Heart right ventricle (tissue), 16 donors: ENCODE measurements at regions of chr9 and their contacts with region 1.

Region 1: GRCh38 chr9:83980395-83981125 is at the start of gene RMI1:
- DNase-seq: peak; percentile 99 to 100
- ATAC-seq: peak; percentile 92 to 97 (median 94)
- H3K4me3 ChIP-seq: peak within 1 kb of the TSS; percentile 69 to 93 (median 83)
- H3K27ac ChIP-seq: peak within 1 kb of the TSS; percentile 93 to 100 (median 98)
- H3K4me1 ChIP-seq: peaks cover 0 to 52% (median 39%) of the 10 kb centered on the region in 9 donors
- H3K27me3 ChIP-seq: no peaks in the 10 kb centered on the region
- CTCF ChIP-seq: peak in 2 of 9 donors; percentile 11 to 48
- total RNA-seq, gene RMI1: 4.2 to 9.7 (median 5.8) TPM

Region 2: GRCh38 chr9:83920927-83921707 is 59.4 kb before region 1 on chr9 and contains the start of gene KIF27:
- intact Hi-C with region 1: loop called in 2 of 10 experiments (anchors 2 to 5 kb)
- DNase-seq: peak; percentile 99 to 100
- ATAC-seq: peak; percentile 98 to 100 (median 99)
- H3K4me3 ChIP-seq: peak within 1 kb of the TSS; percentile 58 to 84 (median 78)
- H3K27ac ChIP-seq: peak within 1 kb of the TSS; percentile 50 to 96 (median 93)
- H3K4me1 ChIP-seq: peaks cover 0 to 16% (median 8%) of the 10 kb centered on the region in 9 donors
- H3K27me3 ChIP-seq: no peaks in the 10 kb centered on the region
- CTCF ChIP-seq: peak in 8 of 9 donors; percentile 14 to 64 (median 48)
- total RNA-seq, gene KIF27: 2.1 to 6.3 (median 3.2) TPM

Region 3: GRCh38 chr9:83956434-83957247 is 23.9 kb before region 1 on chr9:
- intact Hi-C with region 1: loop called in 2 of 10 experiments (anchors 1 to 2 kb)
- DNase-seq: peak; percentile 78 to 81
- ATAC-seq: peak; percentile 92 to 97 (median 94)
- H3K4me3 ChIP-seq: peak overlapping the region; percentile 60 to 85 (median 80)
- H3K27ac ChIP-seq: peak overlapping the region; percentile 28 to 92 (median 88)
- H3K4me1 ChIP-seq: peaks cover 4 to 23% (median 17%) of the 10 kb centered on the region in 9 donors
- H3K27me3 ChIP-seq: no peaks in the 10 kb centered on the region
- CTCF ChIP-seq: no peak

Region 4: GRCh38 chr9:84061594-84062193 is 81.1 kb after region 1 on chr9:
- intact Hi-C with region 1: loop called in 1 of 10 experiments (anchors 5 kb)
- DNase-seq: no peak
- ATAC-seq: peak; percentile 71 to 93 (median 84)
- H3K4me3 ChIP-seq: no peak overlapping the region
- H3K27ac ChIP-seq: peak overlapping the region in 8 of 10 donors; percentile 43 to 79 (median 76)
- H3K4me1 ChIP-seq: peaks cover 0 to 23% (median 6%) of the 10 kb centered on the region in 9 donors
- H3K27me3 ChIP-seq: no peaks in the 10 kb centered on the region
- CTCF ChIP-seq: no peak

Region 5: GRCh38 chr9:84139296-84140070 is 158.9 kb after region 1 on chr9:
- intact Hi-C with region 1: loop called in 1 of 10 experiments (anchors 10 kb)
- DNase-seq: peak in 1 of 2 donors; percentile 59
- ATAC-seq: peak in 6 of 8 donors; percentile 60 to 77 (median 70)
- H3K4me3 ChIP-seq: no peak overlapping the region
- H3K27ac ChIP-seq: peak overlapping the region in 3 of 10 donors; percentile 2 to 33 (median 30)
- H3K4me1 ChIP-seq: peaks cover 0 to 28% (median 23%) of the 10 kb centered on the region in 9 donors
- H3K27me3 ChIP-seq: peaks cover 0 to 42% (median 25%) of the 10 kb centered on the region in 7 donors
- CTCF ChIP-seq: no peak